ENCODE measurements at regions of chr11 and their contacts with region 1.

Region 1: GRCh38 chr11:76207642-76208401 is 1.5 kb upstream of the WNT11 start:
- DNase-seq: peak; percentile 87
- ATAC-seq: peak; percentile 76
- H3K4me3 ChIP-seq: peak overlapping the region; percentile 56 to 82 (median 65)
- H3K4me3 Mint-ChIP-seq: peak overlapping the region; percentile 92
- H3K27ac ChIP-seq: no peak overlapping the region
- H3K27ac Mint-ChIP-seq: no peak overlapping the region
- H3K4me1 ChIP-seq: peaks cover 47 to 60% of the 10 kb centered on the region in 2 donors
- H3K4me1 Mint-ChIP-seq: peaks cover 24% of the 10 kb centered on the region
- H3K27me3 ChIP-seq: peaks cover 0 to 81% (median 47%) of the 10 kb centered on the region in 4 experiments
- H3K27me3 Mint-ChIP-seq: peaks cover 49% of the 10 kb centered on the region
- CTCF ChIP-seq: peak; percentile 98

Region 2: DNA sequence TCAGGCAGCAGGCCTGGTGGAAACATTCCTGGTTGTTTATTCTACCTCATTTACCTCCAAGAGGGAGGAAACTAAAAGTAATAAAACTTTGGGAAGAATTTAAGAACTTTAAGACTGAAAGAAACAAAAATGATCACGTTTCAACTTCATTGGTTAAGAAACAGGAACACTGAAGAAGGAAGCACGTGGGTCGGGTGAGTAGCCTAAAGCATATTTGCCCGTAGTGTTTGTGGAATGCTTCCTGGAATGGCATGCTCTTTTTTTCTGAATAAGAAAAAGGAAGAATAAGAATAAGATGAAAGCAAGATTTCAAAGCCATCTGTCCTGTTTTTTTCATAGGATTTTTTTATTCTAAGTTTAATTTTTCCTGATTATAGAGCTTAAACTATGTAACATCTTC is 84.6 kb before region 1 on chr11:
- CTCF ChIA-PET with region 1: no interaction called
- POLR2A ChIA-PET with region 1: no interaction called
- intact Hi-C with region 1: no loop called
- DNase-seq: no peak
- ATAC-seq: no peak
- H3K4me3 ChIP-seq: no peak overlapping the region
- H3K4me3 Mint-ChIP-seq: no peak overlapping the region
- H3K27ac ChIP-seq: no peak overlapping the region
- H3K27ac Mint-ChIP-seq: peak overlapping the region; percentile 44
- H3K4me1 ChIP-seq: peaks cover 16 to 23% of the 10 kb centered on the region in 2 donors
- H3K4me1 Mint-ChIP-seq: peaks cover 27% of the 10 kb centered on the region
- H3K27me3 ChIP-seq: no peaks in the 10 kb centered on the region
- H3K27me3 Mint-ChIP-seq: no peaks in the 10 kb centered on the region
- CTCF ChIP-seq: no peak

Region 3: DNA sequence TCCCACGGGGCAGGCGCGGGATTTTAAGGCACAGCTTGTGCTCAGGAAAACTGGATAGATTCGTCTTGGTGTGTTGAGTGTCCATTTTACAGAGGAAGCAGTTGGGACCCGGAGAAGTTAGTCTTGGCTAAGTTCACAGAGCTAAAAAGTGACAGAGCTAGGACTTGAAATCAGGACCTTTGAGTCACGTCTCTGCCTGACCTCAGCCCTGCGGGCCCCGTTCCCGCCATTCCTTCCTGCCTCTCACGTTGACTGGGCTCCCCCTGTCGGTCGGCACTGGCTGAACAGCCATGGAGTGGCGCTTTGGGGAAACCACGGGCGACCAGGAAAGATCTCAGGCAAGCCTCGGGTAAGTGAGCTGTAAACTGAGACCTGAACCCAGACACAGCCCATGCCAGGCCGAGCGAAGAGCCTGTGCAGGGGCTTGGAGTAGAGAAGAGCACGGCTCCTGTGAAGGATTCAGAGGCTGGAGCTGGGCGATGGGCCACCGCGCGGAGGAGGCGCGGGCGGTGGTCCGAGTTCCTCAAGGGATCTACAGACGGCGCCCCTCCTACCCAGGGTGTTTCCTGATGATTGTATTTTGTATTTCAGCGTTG is 55.6 kb before region 1 on chr11:
- CTCF ChIA-PET with region 1: interaction called, 11 read pairs
- POLR2A ChIA-PET with region 1: interaction called, 8 read pairs
- intact Hi-C with region 1: no loop called
- DNase-seq: peak; percentile 80
- ATAC-seq: peak; percentile 82
- H3K4me3 ChIP-seq: peak overlapping the region; percentile 15 to 55 (median 47)
- H3K4me3 Mint-ChIP-seq: peak overlapping the region; percentile 74
- H3K27ac ChIP-seq: no peak overlapping the region
- H3K27ac Mint-ChIP-seq: peak overlapping the region; percentile 21
- H3K4me1 ChIP-seq: peaks cover 18 to 21% of the 10 kb centered on the region in 2 donors
- H3K4me1 Mint-ChIP-seq: peaks cover 25% of the 10 kb centered on the region
- H3K27me3 ChIP-seq: no peaks in the 10 kb centered on the region
- H3K27me3 Mint-ChIP-seq: no peaks in the 10 kb centered on the region
- CTCF ChIP-seq: peak; percentile 93

Region 4: DNA sequence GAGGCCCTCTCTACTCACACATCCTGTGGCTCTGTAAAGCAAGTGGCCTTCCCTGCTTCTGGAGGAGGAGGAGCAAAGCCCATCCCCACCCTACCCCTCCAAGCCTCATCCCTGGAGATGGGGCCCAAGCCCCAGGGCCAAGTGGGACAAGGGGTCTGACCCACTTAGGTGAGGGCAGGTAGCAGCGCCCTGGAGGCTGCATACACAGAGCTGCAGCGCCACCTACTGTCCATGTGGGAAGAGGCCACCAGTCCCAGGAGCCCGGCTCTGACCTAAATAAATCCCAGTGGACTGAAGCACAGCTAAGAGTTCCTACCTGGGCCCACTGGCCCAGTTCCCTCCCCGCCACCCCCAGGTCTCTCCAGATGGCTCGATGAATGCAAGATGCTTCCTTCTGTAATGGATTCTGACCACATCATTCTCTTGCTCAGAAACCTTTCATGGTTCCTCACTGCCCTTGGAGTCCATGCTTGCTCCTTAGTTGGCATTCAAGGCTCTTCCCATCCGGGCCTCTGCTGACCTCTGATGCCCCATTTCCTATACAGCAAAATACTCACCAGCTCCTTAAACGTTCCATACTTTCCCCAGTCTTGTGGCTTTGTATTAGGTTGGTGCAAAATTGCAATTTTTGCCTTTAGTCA is 111.0 kb after region 1 on chr11:
- CTCF ChIA-PET with region 1: interaction called, 144 read pairs
- POLR2A ChIA-PET with region 1: no interaction called
- intact Hi-C with region 1: no loop called
- DNase-seq: peak; percentile 88
- ATAC-seq: peak; percentile 96
- H3K4me3 ChIP-seq: no peak overlapping the region
- H3K4me3 Mint-ChIP-seq: no peak overlapping the region
- H3K27ac ChIP-seq: no peak overlapping the region
- H3K27ac Mint-ChIP-seq: no peak overlapping the region
- H3K4me1 ChIP-seq: no peaks in the 10 kb centered on the region
- H3K4me1 Mint-ChIP-seq: no peaks in the 10 kb centered on the region
- H3K27me3 ChIP-seq: peaks cover 0 to 33% (median 19%) of the 10 kb centered on the region in 4 experiments
- H3K27me3 Mint-ChIP-seq: peaks cover 33% of the 10 kb centered on the region
- CTCF ChIP-seq: peak; percentile 86

Region 5: GRCh38 chr11:76419896-76420295 is 212.1 kb after region 1 on chr11:
- CTCF ChIA-PET with region 1: interaction called, 12 read pairs
- POLR2A ChIA-PET with region 1: no interaction called
- intact Hi-C with region 1: no loop called
- DNase-seq: peak; percentile 31
- ATAC-seq: no peak
- H3K4me3 ChIP-seq: no peak overlapping the region
- H3K4me3 Mint-ChIP-seq: no peak overlapping the region
- H3K27ac ChIP-seq: no peak overlapping the region
- H3K27ac Mint-ChIP-seq: no peak overlapping the region
- H3K4me1 ChIP-seq: peaks cover 0 to 3% of the 10 kb centered on the region in 2 donors
- H3K4me1 Mint-ChIP-seq: peaks cover 4% of the 10 kb centered on the region
- H3K27me3 ChIP-seq: peaks cover 0 to 3% (median 0%) of the 10 kb centered on the region in 4 experiments
- H3K27me3 Mint-ChIP-seq: peaks cover 9% of the 10 kb centered on the region
- CTCF ChIP-seq: peak; percentile 67

Region 6: DNA sequence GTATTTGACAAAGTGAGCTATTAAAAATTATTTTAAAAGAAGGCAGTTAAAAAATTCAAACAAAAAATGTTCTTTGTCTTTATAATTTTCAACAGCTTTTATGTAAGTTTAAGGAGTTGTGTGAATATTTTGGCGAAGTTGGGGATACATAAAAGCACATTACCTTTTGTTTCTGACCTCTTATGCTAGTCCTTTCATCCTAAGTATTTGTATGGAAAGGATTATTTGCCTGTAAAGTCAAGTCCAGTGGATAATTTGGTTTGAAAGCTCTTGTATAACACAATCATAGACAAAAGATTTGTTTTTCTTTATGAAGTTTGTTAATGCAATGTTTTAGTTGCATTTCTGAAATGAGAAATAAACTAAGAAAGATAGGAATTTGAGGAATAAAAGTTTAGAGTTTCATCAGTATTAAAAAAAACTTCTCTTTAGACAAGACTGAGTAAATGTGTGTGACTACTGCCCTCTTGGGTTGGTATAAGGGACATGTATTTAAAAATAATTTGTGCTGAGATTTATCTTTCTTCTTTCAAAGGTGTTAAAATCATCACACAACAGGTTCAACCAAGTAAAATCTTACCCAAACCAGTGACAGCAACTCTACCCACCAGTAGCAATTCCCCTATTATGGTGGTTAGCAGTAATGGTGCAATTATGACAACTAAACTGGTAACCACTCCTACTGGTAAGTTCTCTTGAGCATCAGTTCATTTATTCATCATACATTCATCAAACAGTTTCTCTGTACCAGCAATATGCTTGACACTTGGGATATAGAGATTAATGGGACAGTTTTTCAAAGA is 305.2 kb after region 1 on chr11:
- CTCF ChIA-PET with region 1: interaction called, 4 read pairs
- POLR2A ChIA-PET with region 1: no interaction called
- intact Hi-C with region 1: loop called (anchors 5 kb)
- DNase-seq: no peak
- ATAC-seq: no peak
- H3K4me3 ChIP-seq: no peak overlapping the region
- H3K4me3 Mint-ChIP-seq: no peak overlapping the region
- H3K27ac ChIP-seq: no peak overlapping the region
- H3K27ac Mint-ChIP-seq: no peak overlapping the region
- H3K4me1 ChIP-seq: no peaks in the 10 kb centered on the region
- H3K4me1 Mint-ChIP-seq: peaks cover 3% of the 10 kb centered on the region
- H3K27me3 ChIP-seq: no peaks in the 10 kb centered on the region
- H3K27me3 Mint-ChIP-seq: no peaks in the 10 kb centered on the region
- CTCF ChIP-seq: no peak